Lower leg skin (tissue), 4 donors: ENCODE measurements at regions of chr7 and their contacts with region 1.

Region 1: DNA sequence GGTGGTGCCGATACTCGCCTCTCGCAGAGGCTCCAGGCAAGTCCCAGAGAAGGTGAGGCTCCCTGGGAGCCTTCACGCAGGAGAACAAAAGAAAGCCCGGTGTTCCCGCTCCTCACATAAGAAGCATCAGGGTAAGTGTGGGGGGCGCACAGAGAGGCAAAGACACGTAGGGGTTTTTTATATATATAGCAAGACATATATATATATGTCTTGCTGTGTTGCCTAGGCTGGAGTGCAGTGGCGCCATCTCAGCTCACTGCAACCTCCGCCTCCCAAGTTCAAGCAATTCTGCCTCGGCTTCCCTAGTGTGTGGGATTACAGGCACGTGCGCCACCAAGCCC is 61.3 kb downstream of the PDIA4 start:
- DNase-seq: no peak
- H3K4me3 ChIP-seq: no peak overlapping the region
- CTCF ChIP-seq: no peak
- POLR2A ChIP-seq: no peak

Region 2: DNA sequence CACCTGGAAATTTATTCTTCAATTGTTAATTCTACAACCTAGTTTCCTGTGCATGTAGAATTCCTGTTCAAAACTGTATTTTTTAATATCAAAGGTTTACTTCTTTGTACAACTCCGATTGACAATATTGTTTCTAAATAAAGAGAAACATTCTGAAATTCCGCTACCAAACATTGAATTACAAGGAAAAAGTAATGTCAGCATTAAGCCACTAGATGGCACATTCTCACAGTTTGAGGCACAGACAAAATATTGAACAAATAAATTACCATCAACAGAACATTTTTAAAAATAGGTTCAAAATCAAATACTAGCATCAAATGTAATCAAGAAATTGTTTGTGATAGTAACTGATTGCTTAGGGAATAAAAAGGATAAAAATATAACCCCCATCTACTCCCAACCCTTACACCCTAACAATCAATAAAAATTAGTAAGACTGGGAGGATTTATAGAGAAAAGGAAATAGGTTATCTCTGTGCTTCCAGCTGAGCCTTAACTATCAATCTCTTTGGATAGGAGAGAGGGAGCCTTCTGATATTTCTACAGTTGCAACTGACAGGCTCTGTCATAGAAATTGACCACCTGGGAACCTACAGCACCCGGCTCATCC is 463.0 kb before region 1 on chr7:
- intact Hi-C with region 1: loop called (anchors 5 kb)
- DNase-seq: no peak
- H3K4me3 ChIP-seq: no peak overlapping the region
- CTCF ChIP-seq: no peak
- POLR2A ChIP-seq: no peak

Region 3: DNA sequence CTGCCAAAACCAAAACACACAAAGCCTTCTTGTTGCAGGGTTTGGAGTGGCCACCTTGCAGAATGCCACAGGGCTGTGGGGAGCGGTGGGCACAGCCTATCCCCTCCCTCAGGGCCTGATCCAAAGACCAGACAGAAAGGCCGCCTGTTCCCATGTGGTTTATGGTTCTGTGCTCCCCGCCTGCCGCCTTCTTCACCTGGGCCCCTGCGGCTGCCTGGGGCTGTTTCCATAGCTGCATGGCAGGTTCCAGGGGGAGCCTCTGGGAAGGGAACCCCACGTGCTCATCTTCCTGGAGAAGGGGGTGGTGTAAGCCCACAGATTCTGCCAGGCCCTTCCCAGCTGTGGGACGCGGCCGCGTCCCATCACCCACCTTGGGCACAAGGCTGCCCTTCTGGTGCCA is 12.2 kb before region 1 on chr7:
- intact Hi-C with region 1: no loop called
- DNase-seq: no peak
- H3K4me3 ChIP-seq: no peak overlapping the region
- CTCF ChIP-seq: no peak
- POLR2A ChIP-seq: no peak